Spleen (tissue), 13 donors: ENCODE measurements at regions of chr2 and their contacts with region 1.

Region 1: GRCh38 chr2:225002039-225002655 is 40.1 kb downstream of the DOCK10 start:
- DNase-seq: no peak
- H3K4me3 ChIP-seq: peak overlapping the region in 1 of 8 donors; percentile 22
- H3K27ac ChIP-seq: peak overlapping the region in 5 of 8 donors; percentile 29 to 67 (median 52)
- H3K4me1 ChIP-seq: peaks cover 0 to 75% (median 37%) of the 10 kb centered on the region in 6 donors
- H3K27me3 ChIP-seq: no peaks in the 10 kb centered on the region
- CTCF ChIP-seq: peak; percentile 68 to 90 (median 84)
- POLR2A ChIP-seq: no peak

Region 2: DNA sequence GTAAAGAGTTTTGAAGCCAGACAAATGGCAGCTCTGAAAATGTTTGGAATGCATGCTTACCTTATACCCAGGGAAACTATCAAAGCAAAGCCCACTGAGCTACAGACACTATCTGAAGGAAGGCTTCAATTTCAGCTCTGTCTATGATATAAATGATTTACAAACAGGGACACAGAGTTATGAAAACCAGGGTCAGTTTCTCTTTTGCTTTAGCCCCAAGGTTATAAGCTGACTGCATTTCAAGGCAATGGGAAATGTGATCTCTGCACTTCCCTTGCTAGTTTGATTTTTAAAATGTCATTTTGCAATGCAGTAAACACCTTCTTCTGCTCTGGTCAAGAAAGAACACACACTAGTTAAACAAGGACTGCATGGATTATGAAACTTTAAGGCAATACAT is 220.7 kb before region 1 on chr2:
- intact Hi-C with region 1: loop called (anchors 10 kb)
- DNase-seq: no peak
- H3K4me3 ChIP-seq: no peak overlapping the region
- H3K27ac ChIP-seq: peak overlapping the region in 7 of 8 donors; percentile 39 to 73 (median 60)
- H3K4me1 ChIP-seq: peaks cover 0 to 49% (median 10%) of the 10 kb centered on the region in 6 donors
- H3K27me3 ChIP-seq: no peaks in the 10 kb centered on the region
- CTCF ChIP-seq: no peak
- POLR2A ChIP-seq: no peak

Region 3: GRCh38 chr2:224938651-224939182 is 63.4 kb before region 1 on chr2:
- intact Hi-C with region 1: loop called (anchors 10 kb)
- DNase-seq: no peak
- H3K4me3 ChIP-seq: peak overlapping the region in 1 of 8 donors; percentile 16
- H3K27ac ChIP-seq: peak overlapping the region in 7 of 8 donors; percentile 52 to 89 (median 68)
- H3K4me1 ChIP-seq: peaks cover 41 to 99% (median 75%) of the 10 kb centered on the region in 6 donors
- H3K27me3 ChIP-seq: no peaks in the 10 kb centered on the region
- CTCF ChIP-seq: no peak
- POLR2A ChIP-seq: no peak